Vagina (tissue), 2 donors: ENCODE measurements at regions of chr13 and their contacts with region 1.

Region 1: DNA sequence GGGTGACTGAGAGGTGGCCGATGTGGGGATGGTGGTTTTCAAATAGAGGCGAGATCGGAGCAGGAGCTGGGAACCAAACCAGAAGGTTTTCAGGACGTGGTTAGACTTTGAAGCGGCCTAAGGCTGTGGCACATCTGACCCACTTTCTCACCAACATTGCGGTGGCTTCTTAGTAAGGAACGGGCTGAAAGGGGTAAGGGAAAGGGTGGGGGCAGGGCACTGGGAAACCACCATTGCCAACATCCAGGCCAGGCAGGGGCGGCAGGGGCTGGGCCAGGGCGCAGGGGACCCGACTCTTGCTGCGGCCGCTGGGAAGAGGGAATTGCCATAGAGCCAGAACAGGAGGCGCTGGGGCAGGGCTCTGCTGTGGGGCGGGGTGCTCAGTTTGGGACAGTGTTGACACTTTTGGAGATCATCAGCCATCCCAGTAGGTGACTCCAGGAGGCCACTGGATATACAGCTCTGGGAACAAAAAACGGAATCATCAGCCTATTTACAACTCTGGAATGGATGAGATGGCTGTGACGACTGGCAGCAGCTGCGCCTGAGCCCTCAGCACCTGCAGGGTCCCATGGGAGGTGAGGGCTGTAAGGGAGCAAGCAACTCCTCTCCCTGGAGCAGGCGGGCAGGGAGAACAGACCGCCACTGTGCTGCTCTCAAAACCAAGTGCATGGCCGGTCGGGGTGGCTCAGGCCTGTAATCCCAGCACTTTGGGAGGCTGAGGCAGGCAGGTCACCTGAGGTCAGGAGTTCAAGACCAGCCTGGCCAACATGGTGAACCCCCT is 52.2 kb downstream of the IRS2 start:
- DNase-seq: no peak
- H3K4me3 ChIP-seq: no peak overlapping the region
- H3K27ac ChIP-seq: no peak overlapping the region
- H3K4me1 ChIP-seq: no peaks in the 10 kb centered on the region
- H3K27me3 ChIP-seq: no peaks in the 10 kb centered on the region
- CTCF ChIP-seq: no peak
- POLR2A ChIP-seq: no peak

Region 2: GRCh38 chr13:107753291-107753690 is 1980.9 kb before region 1 on chr13:
- intact Hi-C with region 1: loop called (anchors 5 kb)
- DNase-seq: no peak
- H3K4me3 ChIP-seq: no peak overlapping the region
- H3K27ac ChIP-seq: no peak overlapping the region
- H3K4me1 ChIP-seq: no peaks in the 10 kb centered on the region
- H3K27me3 ChIP-seq: no peaks in the 10 kb centered on the region
- CTCF ChIP-seq: no peak
- POLR2A ChIP-seq: no peak

Region 3: DNA sequence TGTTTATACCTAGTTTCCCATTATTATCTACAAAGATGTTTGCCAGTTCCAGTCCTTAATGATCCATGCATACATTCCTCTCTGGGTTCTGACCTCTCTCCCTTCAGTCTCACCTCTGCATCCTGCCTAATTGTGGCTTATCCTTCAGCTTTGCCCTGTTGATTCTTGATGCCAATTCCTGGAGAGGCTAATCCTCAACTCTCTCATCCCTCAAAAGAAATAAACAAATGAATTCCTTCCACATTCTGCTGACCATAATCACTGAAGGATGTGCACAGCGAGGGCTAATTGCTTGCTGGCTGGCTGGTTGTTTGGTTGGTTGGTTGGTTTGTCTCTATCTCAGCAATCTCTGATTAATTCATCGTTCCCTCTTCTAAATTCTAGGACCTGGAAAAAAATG is 61.6 kb before region 1 on chr13:
- intact Hi-C with region 1: no loop called
- DNase-seq: no peak
- H3K4me3 ChIP-seq: no peak overlapping the region
- H3K27ac ChIP-seq: no peak overlapping the region
- H3K4me1 ChIP-seq: no peaks in the 10 kb centered on the region
- H3K27me3 ChIP-seq: no peaks in the 10 kb centered on the region
- CTCF ChIP-seq: no peak
- POLR2A ChIP-seq: no peak

Region 4: DNA sequence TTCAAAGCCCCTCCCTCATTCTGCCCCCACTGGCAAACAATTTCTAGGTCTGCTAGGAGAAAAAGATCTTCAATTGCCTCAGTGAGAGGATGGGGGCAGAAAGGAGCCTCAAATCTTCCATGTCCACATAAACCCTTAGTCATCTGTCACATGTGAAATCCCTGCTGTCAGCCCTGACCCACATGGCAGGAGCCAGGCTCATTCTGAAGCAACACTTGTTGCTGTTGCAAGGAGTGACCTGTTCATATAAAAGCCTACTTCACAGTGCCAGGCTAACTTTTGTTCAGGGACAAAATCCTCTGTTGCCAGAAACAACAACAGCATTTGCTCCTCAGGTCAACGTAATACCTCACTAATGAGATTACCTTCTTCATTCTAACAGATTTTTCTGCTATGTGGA is 18.3 kb before region 1 on chr13:
- intact Hi-C with region 1: no loop called
- DNase-seq: peak in 1 of 2 donors; percentile 84
- H3K4me3 ChIP-seq: no peak overlapping the region
- H3K27ac ChIP-seq: no peak overlapping the region
- H3K4me1 ChIP-seq: no peaks in the 10 kb centered on the region
- H3K27me3 ChIP-seq: no peaks in the 10 kb centered on the region
- CTCF ChIP-seq: no peak
- POLR2A ChIP-seq: no peak